ENCODE measurements at regions of chr12 and their contacts with region 1.

Region 1: GRCh38 chr12:25052196-25052913 is 103.5 kb upstream of the BCAT1 start:
- DNase-seq: no peak
- H3K4me3 ChIP-seq: peak overlapping the region in 56 of 59 donors; percentile 1 to 60 (median 42)
- H3K27ac ChIP-seq: peak overlapping the region in 51 of 59 donors; percentile 0 to 75 (median 53)
- H3K27me3 ChIP-seq: no peaks in the 10 kb centered on the region
- CTCF ChIP-seq: no peak

Region 2: DNA sequence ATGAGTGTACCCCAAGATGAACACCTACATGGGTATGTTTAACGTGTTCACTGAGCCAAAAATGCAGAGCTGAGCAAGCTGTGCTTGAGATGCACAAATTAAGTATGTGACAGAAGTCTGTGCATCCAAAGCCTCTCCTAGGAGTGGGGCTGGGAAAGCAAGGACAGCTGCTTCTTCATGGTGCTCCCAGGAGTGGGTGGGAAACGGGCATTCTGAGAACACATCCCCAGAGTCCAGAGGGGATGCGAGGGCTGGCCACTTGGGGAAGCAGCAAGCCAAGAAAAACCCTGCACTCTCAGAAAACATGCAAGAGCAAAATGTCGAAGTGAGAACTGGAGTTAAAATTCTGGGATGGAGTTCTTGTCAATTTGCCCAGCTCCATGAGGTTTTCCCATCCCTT is 517.7 kb before region 1 on chr12:
- intact Hi-C with region 1: no loop called
- DNase-seq: peak in 6 of 10 donors; percentile 14 to 64 (median 50)
- H3K4me3 ChIP-seq: peak overlapping the region in 16 of 59 donors; percentile 2 to 42 (median 16)
- H3K27ac ChIP-seq: peak overlapping the region in 53 of 59 donors; percentile 9 to 85 (median 70)
- H3K27me3 ChIP-seq: no peaks in the 10 kb centered on the region
- CTCF ChIP-seq: peak in 2 of 56 donors; percentile 11 to 13

Region 3: GRCh38 chr12:25089738-25090137 is 37.4 kb after region 1 on chr12:
- intact Hi-C with region 1: loop called in 1 of 2 experiments (anchors 5 kb)
- DNase-seq: no peak
- H3K4me3 ChIP-seq: no peak overlapping the region
- H3K27ac ChIP-seq: no peak overlapping the region
- H3K27me3 ChIP-seq: no peaks in the 10 kb centered on the region
- CTCF ChIP-seq: no peak